Heart right ventricle (tissue), 16 donors: ENCODE measurements at regions of chr10 and their contacts with region 1.

Region 1: DNA sequence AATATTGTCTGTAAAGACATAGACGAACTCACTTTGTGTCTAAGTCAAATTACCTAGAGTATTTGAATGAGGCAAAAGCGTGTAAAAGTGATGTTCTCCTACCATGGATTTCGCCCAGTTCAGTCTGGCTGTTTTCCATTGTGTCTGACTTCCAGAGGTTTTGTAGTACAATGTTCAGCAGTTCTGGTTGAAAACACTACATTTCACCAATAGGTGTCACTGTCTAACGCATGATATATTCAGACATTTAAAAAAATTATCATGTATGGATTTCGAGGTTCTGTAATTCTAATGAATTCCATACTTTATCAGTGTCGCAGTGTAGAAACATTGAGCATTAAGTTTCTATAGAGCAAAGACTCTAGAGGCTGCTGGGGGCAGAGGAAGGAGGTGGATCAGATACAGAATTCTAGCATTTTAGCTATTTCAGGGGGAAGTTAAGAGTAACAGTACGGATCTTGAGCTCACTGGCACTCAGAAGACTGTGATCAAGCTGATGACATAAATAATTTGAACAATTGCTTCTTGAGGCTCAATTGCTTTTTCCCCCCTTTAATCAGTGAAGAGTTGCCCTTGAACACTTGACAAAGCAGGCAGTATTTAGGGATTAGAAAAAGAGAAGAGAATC is 196.9 kb upstream of the RHOBTB1 start:
- DNase-seq: peak in 1 of 2 donors; percentile 40
- ATAC-seq: peak in 4 of 8 donors; percentile 54 to 71 (median 66)
- H3K4me3 ChIP-seq: no peak overlapping the region
- H3K27ac ChIP-seq: no peak overlapping the region
- H3K4me1 ChIP-seq: peaks cover 0 to 19% (median 0%) of the 10 kb centered on the region in 9 donors
- H3K27me3 ChIP-seq: no peaks in the 10 kb centered on the region
- CTCF ChIP-seq: peak; percentile 57 to 87 (median 74)

Region 2: GRCh38 chr10:60426400-60426799 is 714.5 kb before region 1 on chr10:
- intact Hi-C with region 1: no loop called
- DNase-seq: no peak
- ATAC-seq: no peak
- H3K4me3 ChIP-seq: no peak overlapping the region
- H3K27ac ChIP-seq: no peak overlapping the region
- H3K4me1 ChIP-seq: peaks cover 0 to 41% (median 28%) of the 10 kb centered on the region in 9 donors
- H3K27me3 ChIP-seq: no peaks in the 10 kb centered on the region
- CTCF ChIP-seq: no peak

Region 3: DNA sequence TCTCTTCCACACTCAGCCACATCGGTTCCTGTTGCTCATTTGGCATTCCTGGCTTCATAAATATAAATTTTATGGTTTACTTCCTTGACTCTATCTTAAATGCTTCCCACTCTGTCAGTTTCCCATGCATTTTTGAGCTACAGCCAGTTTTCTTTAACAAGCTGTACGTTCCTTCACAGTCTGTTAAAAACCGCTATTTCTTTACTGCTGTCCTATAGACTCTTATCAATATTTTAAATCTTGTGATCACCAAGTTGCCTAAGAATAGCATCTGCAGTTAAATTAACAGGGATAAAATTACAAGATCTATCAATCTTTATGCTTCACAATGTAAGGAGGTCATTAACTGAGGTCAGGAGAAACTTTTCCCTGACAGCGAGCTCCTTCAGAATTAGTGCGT is 93.8 kb before region 1 on chr10:
- intact Hi-C with region 1: no loop called
- DNase-seq: no peak
- ATAC-seq: no peak
- H3K4me3 ChIP-seq: no peak overlapping the region
- H3K27ac ChIP-seq: no peak overlapping the region
- H3K4me1 ChIP-seq: no peaks in the 10 kb centered on the region
- H3K27me3 ChIP-seq: no peaks in the 10 kb centered on the region
- CTCF ChIP-seq: no peak

Region 4: DNA sequence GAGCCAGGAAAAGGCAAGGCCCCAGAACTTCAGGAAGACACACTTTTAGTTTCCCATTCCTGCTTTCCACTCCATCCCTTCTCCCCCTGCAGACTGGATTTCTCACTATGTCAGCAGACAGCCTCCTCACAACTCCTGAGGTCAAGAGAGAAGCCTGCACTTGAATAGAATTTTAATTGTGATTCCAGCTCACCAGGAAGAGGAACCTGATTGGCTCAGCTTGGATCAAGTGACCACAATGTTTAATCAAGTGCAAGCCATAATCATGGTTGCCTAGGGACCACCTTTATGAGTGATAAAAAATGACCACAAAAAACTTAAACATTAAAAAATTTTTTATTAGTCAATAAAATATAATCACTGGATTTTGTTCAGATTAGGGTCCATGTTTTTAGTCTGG is 47.8 kb after region 1 on chr10:
- intact Hi-C with region 1: loop called in 4 of 10 experiments (anchors 1 to 5 kb)
- DNase-seq: no peak
- ATAC-seq: peak in 2 of 8 donors; percentile 20 to 25
- H3K4me3 ChIP-seq: no peak overlapping the region
- H3K27ac ChIP-seq: no peak overlapping the region
- H3K4me1 ChIP-seq: peaks cover 0 to 11% (median 0%) of the 10 kb centered on the region in 9 donors
- H3K27me3 ChIP-seq: no peaks in the 10 kb centered on the region
- CTCF ChIP-seq: no peak

Region 5: GRCh38 chr10:61197057-61197456 is 56.2 kb after region 1 on chr10:
- intact Hi-C with region 1: loop called in 3 of 10 experiments (anchors 5 kb)
- DNase-seq: no peak
- ATAC-seq: peak in 6 of 8 donors; percentile 61 to 84 (median 72)
- H3K4me3 ChIP-seq: no peak overlapping the region
- H3K27ac ChIP-seq: no peak overlapping the region
- H3K4me1 ChIP-seq: peaks cover 0 to 14% (median 5%) of the 10 kb centered on the region in 9 donors
- H3K27me3 ChIP-seq: no peaks in the 10 kb centered on the region
- CTCF ChIP-seq: no peak

Region 6: GRCh38 chr10:61733358-61733940 is 592.6 kb after region 1 on chr10:
- intact Hi-C with region 1: loop called in 4 of 10 experiments (anchors 5 to 10 kb)
- DNase-seq: no peak
- ATAC-seq: no peak
- H3K4me3 ChIP-seq: no peak overlapping the region
- H3K27ac ChIP-seq: no peak overlapping the region
- H3K4me1 ChIP-seq: no peaks in the 10 kb centered on the region
- H3K27me3 ChIP-seq: no peaks in the 10 kb centered on the region
- CTCF ChIP-seq: peak; percentile 20 to 74 (median 60)